ENCODE measurements at regions of chr7 and their contacts with region 1.

Region 1: DNA sequence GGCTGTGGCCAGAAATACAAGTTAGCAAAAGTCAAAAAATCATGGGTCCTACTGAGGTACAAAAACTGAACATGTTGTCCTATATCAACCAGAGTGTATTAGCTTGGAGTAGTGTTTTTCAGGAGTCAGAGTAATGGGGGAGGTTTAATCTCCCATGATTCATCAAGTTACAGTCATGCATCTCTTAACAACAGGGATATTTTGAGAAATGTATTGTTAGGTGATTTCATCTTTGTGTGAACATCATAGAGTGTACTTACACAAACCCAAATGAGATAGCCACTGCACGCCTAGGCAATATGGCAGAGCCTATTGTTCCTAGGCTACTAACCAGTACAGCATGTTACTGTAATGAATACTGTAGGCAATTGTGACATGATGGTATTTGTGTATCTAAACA is 14.9 kb upstream of the TES start:
- DNase-seq: no peak
- H3K4me3 ChIP-seq: no peak overlapping the region
- CTCF ChIP-seq: no peak

Region 2: GRCh38 chr7:116211006-116211912 is 15.8 kb after region 1 on chr7:
- CTCF ChIA-PET with region 1: interaction called, 5 read pairs
- POLR2A ChIA-PET with region 1: interaction called, 10 read pairs
- DNase-seq: peak; percentile 84
- H3K4me3 ChIP-seq: peak overlapping the region; percentile 80
- CTCF ChIP-seq: no peak